Sigmoid colon (tissue), 7 donors: ENCODE measurements at regions of chr6 and their contacts with region 1.

Region 1: GRCh38 chr6:2853761-2854395 is 12.2 kb upstream of the SERPINB1 start:
- DNase-seq: no peak
- H3K4me3 ChIP-seq: peak overlapping the region in 3 of 4 donors; percentile 37 to 45 (median 40)
- H3K27ac ChIP-seq: peak overlapping the region; percentile 52 to 66 (median 59)
- H3K4me1 ChIP-seq: peaks cover 0 to 18% (median 5%) of the 10 kb centered on the region in 4 donors
- H3K27me3 ChIP-seq: no peaks in the 10 kb centered on the region
- CTCF ChIP-seq: peak in 1 of 4 experiments; percentile 39
- EP300 ChIP-seq: peak in 1 of 4 donors; percentile 13
- POLR2A ChIP-seq: no peak

Region 2: GRCh38 chr6:2900821-2901644 is 47.2 kb after region 1 on chr6:
- intact Hi-C with region 1: loop called (anchors 10 kb)
- DNase-seq: no peak
- H3K4me3 ChIP-seq: peak overlapping the region in 3 of 4 donors; percentile 66 to 70 (median 69)
- H3K27ac ChIP-seq: peak overlapping the region; percentile 39 to 49 (median 42)
- H3K4me1 ChIP-seq: peaks cover 0 to 29% (median 13%) of the 10 kb centered on the region in 4 donors
- H3K27me3 ChIP-seq: no peaks in the 10 kb centered on the region
- CTCF ChIP-seq: no peak
- EP300 ChIP-seq: no peak
- POLR2A ChIP-seq: no peak

Region 3: GRCh38 chr6:2940010-2940850 is 86.4 kb after region 1 on chr6:
- intact Hi-C with region 1: no loop called
- DNase-seq: no peak
- H3K4me3 ChIP-seq: no peak overlapping the region
- H3K27ac ChIP-seq: no peak overlapping the region
- H3K4me1 ChIP-seq: no peaks in the 10 kb centered on the region
- H3K27me3 ChIP-seq: no peaks in the 10 kb centered on the region
- CTCF ChIP-seq: no peak
- EP300 ChIP-seq: no peak
- POLR2A ChIP-seq: no peak